ENCODE measurements at regions of chr1 and their contacts with region 1.

Region 1: GRCh38 chr1:206589206-206589605 is 23.1 kb downstream of the EIF2D start:
- DNase-seq: no peak
- ATAC-seq: no peak
- H3K4me3 ChIP-seq: no peak overlapping the region
- H3K27ac ChIP-seq: no peak overlapping the region
- H3K4me1 ChIP-seq: no peaks in the 10 kb centered on the region
- H3K27me3 ChIP-seq: no peaks in the 10 kb centered on the region
- CTCF ChIP-seq: no peak

Region 2: GRCh38 chr1:206600527-206600926 is 11.3 kb after region 1 on chr1:
- CTCF ChIA-PET with region 1: no interaction called
- POLR2A ChIA-PET with region 1: no interaction called
- in situ Hi-C with region 1: no loop called
- intact Hi-C with region 1: loop called (anchors 1 kb)
- DNase-seq: no peak
- ATAC-seq: no peak
- H3K4me3 ChIP-seq: no peak overlapping the region
- H3K27ac ChIP-seq: no peak overlapping the region
- H3K4me1 ChIP-seq: no peaks in the 10 kb centered on the region
- H3K27me3 ChIP-seq: no peaks in the 10 kb centered on the region
- CTCF ChIP-seq: no peak

Region 3: GRCh38 chr1:206725109-206725963 is 136.1 kb after region 1 on chr1:
- CTCF ChIA-PET with region 1: no interaction called
- POLR2A ChIA-PET with region 1: no interaction called
- in situ Hi-C with region 1: no loop called
- intact Hi-C with region 1: no loop called
- DNase-seq: no peak
- ATAC-seq: peak; percentile 49; the same call in 1 of the 2 replicates
- H3K4me3 ChIP-seq: no peak overlapping the region
- H3K27ac ChIP-seq: no peak overlapping the region
- H3K4me1 ChIP-seq: no peaks in the 10 kb centered on the region
- H3K27me3 ChIP-seq: no peaks in the 10 kb centered on the region
- CTCF ChIP-seq: no peak; the same call in none of the 2 replicates

Measured in Panc1 (cell line).